Ovary (tissue), 10 donors: ENCODE measurements at regions of chr5 and their contacts with region 1.

Region 1: DNA sequence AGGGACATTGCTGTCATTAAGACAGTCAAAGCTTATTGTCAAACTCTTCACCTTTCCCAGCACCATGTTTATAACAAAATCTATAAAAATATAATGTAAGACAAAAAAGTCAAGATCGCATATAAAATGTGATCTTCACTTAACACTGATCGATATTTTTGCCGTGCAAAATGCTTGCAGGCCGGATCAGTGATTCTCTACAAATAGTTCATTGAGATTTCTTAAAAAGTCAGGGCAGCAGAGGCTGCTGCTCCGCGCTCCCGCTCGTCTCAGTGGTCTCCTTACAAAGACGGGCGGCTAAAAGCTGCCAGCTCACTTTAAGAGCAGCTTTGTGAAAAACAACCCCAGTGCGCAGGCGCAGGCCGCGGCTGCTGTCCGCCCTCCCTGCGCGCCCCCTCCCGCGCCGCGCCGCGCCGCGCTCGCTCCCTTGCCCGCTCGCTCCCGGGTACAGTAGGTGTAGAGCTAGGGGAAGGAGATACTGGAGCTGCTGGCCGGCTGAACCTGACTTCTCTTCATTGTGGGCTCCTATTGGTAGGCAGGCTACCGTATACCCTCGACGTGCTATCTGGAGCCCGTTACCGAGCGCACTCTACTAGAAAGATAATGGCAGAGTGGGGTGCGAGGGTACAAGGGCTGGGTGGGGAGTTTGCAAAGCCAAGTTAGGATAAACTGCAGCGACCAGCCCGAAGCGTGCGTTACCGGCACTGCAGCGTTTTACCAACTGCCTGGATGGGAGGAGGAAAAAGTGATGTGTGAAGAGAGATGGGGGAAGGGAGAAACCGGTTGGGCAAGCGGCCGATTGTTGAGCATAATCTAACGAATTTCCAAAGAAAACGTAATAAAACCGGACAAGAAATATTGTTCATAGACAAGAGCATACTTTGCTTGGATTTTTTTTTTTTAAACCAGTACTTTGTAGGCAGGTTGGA is at the start of gene ARRDC3:
- DNase-seq: peak; percentile 96 to 98 (median 98)
- H3K4me3 ChIP-seq: peak within 1 kb of the TSS; percentile 62
- H3K27ac ChIP-seq: peak within 1 kb of the TSS; percentile 67 to 98
- H3K4me1 ChIP-seq: no peaks in the 10 kb centered on the region
- H3K27me3 ChIP-seq: no peaks in the 10 kb centered on the region
- CTCF ChIP-seq: peak in 2 of 3 donors; percentile 7 to 42
- EP300 ChIP-seq: no peak
- POLR2A ChIP-seq: peak; percentile 95
- total RNA-seq, gene ARRDC3: 47.4 to 176 (median 107) TPM

Region 2: DNA sequence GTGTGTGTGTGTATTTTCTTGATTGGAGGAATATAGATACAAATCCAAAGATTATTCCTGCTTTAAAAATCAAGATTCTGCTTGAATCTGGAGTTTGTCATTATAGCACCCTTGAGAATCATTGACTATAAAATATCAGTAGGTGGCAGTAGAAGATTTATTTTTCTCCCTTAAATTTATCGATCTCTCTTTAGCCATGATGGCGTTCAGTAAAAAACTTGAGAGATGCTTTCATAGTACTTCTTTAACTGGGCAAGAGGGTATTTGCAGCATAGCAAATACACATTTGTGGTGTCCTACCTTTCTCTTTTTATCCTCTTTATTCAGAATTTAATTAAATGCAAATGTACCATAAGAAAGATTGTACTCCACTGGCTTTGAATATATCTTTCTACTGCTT is 517.0 kb before region 1 on chr5:
- intact Hi-C with region 1: loop called in 3 of 4 experiments (anchors 5 to 10 kb)
- DNase-seq: no peak
- H3K4me3 ChIP-seq: no peak overlapping the region
- H3K27ac ChIP-seq: no peak overlapping the region
- H3K4me1 ChIP-seq: peaks cover 2% of the 10 kb centered on the region
- H3K27me3 ChIP-seq: no peaks in the 10 kb centered on the region
- CTCF ChIP-seq: peak; percentile 27 to 46 (median 42)
- EP300 ChIP-seq: no peak
- POLR2A ChIP-seq: no peak

Region 3: GRCh38 chr5:90932052-90932699 is 451.1 kb before region 1 on chr5:
- intact Hi-C with region 1: loop called in 3 of 4 experiments (anchors 5 to 10 kb)
- DNase-seq: peak in 4 of 5 donors; percentile 39 to 70 (median 46)
- H3K4me3 ChIP-seq: no peak overlapping the region
- H3K27ac ChIP-seq: no peak overlapping the region
- H3K4me1 ChIP-seq: peaks cover 6% of the 10 kb centered on the region
- H3K27me3 ChIP-seq: no peaks in the 10 kb centered on the region
- CTCF ChIP-seq: peak; percentile 34 to 67 (median 53)
- EP300 ChIP-seq: no peak
- POLR2A ChIP-seq: no peak

Region 4: GRCh38 chr5:91101600-91102379 is 281.5 kb before region 1 on chr5:
- intact Hi-C with region 1: loop called (anchors 1 to 10 kb)
- DNase-seq: peak; percentile 70 to 83 (median 72)
- H3K4me3 ChIP-seq: no peak overlapping the region
- H3K27ac ChIP-seq: no peak overlapping the region
- H3K4me1 ChIP-seq: no peaks in the 10 kb centered on the region
- H3K27me3 ChIP-seq: no peaks in the 10 kb centered on the region
- CTCF ChIP-seq: peak; percentile 59 to 85 (median 83)
- EP300 ChIP-seq: no peak
- POLR2A ChIP-seq: no peak

Region 5: DNA sequence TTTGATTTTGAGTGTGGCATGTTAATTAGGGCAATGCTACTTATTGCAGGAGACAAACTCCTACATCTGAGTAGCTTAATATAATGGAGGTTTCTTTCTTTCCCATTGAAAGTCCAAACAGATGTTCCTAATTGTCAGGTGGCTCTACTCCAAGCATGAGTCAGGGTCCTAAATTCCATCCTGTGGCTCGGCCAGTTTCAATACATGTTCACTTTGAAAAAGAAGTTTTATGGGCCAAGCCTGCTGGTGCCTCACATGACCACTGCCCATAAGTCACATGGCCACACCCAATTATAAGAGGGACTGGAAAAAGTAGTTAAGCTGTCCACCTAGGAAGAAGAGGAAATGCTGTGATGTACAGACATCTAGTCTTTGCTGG is 170.6 kb before region 1 on chr5:
- intact Hi-C with region 1: no loop called
- DNase-seq: peak in 2 of 5 donors; percentile 15 to 34
- H3K4me3 ChIP-seq: no peak overlapping the region
- H3K27ac ChIP-seq: peak overlapping the region in 1 of 2 donors; percentile 21
- H3K4me1 ChIP-seq: peaks cover 3% of the 10 kb centered on the region
- H3K27me3 ChIP-seq: no peaks in the 10 kb centered on the region
- CTCF ChIP-seq: no peak
- EP300 ChIP-seq: no peak
- POLR2A ChIP-seq: no peak

Region 6: DNA sequence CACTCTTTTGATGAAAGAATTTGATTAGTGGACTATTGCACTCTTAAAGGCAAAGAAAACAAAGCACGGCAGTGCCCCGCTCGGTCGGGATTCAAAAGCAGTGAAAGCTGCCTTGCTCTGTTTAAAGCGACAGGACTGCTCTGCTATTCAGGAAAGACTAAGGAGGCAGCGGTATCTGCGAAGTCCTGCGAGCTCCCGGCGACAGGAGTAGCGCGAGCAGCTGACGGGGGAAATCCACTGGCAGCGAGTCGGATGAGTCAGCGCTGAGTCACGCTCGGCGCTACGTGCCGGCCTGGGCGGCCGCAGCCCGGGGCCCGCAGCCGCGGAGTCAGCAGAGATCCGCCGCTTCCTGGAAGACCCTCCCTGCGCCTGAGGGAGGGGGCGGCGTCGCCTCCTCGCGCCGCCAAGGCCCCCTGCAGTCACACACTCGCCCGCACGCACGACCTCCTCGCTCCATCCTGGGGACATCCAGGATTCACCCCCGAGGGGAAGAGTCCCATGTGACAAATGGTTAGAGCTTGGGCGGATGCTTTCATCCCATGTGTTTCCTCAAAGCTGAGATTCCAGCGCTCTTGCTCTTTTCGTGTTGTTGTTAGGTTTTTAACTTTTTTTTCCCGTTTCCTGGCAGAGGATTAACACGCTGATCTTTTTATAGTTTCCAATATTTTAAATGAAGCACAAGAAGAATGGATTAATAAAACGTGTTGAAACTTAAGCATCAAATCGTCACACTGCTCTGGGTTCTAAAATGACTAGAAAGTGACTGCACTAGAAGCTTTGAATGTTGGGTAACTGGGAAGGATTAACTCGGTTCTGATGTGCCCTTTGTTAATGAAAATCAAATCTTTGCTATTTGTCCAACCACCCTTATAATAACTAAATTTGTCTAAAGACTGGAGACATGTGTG is 102.7 kb before region 1 on chr5:
- intact Hi-C with region 1: loop called in 2 of 4 experiments (anchors 1 to 5 kb)
- DNase-seq: peak; percentile 93 to 95 (median 94)
- H3K4me3 ChIP-seq: peak overlapping the region; percentile 62
- H3K27ac ChIP-seq: peak overlapping the region; percentile 22 to 77
- H3K4me1 ChIP-seq: no peaks in the 10 kb centered on the region
- H3K27me3 ChIP-seq: no peaks in the 10 kb centered on the region
- CTCF ChIP-seq: no peak
- EP300 ChIP-seq: peak; percentile 37
- POLR2A ChIP-seq: peak; percentile 48